ENCODE measurements at regions of chr19 and their contacts with region 1.

Region 1: DNA sequence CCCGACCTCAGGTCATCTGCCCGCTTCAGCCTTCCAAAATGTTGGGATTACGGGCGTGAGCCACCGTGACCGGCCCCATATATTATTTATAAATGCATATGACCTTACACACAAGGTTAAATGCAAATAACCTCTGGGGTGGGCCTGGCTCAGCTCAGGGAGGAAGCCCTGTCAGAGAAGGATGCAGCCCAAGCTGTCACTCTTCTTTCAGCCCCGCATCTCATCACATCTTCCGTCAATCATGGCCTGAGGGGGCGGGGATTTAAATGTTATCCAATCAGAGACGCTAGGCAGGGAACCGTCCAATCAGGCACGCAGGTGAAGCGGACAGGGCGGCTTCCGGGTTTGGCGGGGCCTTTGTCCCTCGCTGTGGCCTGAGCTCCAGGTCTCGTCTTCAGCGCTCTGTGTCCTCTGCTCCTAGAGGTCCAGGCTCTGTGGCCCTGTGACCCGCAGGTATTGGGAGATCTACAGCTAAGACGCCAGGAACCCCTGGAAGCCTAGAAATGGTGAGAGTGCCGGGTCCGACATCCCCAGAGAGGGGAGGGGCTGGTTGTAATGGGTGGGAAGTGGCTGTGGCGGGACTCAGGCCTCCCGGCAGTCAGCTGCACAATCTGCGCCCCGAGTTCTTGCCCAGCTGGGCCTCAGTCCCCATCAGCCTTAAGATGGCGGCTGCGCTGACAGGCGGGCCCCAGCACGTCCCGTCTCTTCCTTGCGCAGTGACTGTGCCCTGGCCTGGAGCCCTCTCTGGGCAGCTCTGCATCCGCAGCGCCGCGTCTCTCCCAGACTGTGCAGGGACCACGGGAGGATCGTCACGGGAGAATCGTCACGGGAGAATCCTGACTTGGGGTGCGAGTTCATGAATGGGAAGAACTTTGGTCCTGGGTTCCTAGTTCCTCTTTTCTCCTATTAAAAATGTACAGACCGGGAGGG is at the start of gene ZNF430:
- DNase-seq: peak; percentile 98
- H3K4me3 ChIP-seq: peak within 1 kb of the TSS; percentile 93
- H3K27ac ChIP-seq: peak within 1 kb of the TSS; percentile 84
- H3K4me1 ChIP-seq: peaks cover 8% of the 10 kb centered on the region
- H3K27me3 ChIP-seq: no peaks in the 10 kb centered on the region
- CTCF ChIP-seq: no peak
- total RNA-seq, gene ZNF430: 11.3 and 12.4 TPM in 2 replicates

Region 2: GRCh38 chr19:20999731-21000352 is 20.7 kb before region 1 on chr19:
- CTCF ChIA-PET with region 1: no interaction called
- POLR2A ChIA-PET with region 1: no interaction called
- intact Hi-C with region 1: no loop called
- DNase-seq: peak; percentile 79
- H3K4me3 ChIP-seq: peak overlapping the region; percentile 42
- H3K27ac ChIP-seq: no peak overlapping the region
- H3K4me1 ChIP-seq: no peaks in the 10 kb centered on the region
- H3K27me3 ChIP-seq: no peaks in the 10 kb centered on the region
- CTCF ChIP-seq: no peak

Region 3: DNA sequence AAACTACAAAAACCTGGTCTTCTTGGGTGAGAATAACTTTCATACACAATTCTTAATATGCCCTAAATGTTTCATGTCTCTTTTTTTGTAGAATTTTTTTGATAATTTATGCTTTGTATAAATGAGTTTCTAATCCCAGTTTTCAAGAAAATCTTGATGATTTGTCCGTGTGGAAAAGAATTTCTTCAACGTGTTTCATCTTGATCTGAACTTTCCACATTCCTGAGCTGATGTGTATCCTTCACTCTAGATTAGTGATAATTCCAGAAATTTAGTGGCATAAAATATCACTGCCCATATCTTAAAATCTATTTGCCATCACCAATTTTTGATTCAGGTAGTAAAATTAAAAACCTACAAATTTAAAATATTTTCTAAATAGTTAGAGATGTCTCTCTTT is 145.9 kb after region 1 on chr19:
- CTCF ChIA-PET with region 1: no interaction called
- POLR2A ChIA-PET with region 1: no interaction called
- intact Hi-C with region 1: loop called (anchors 10 kb)
- DNase-seq: no peak
- H3K4me3 ChIP-seq: no peak overlapping the region
- H3K27ac ChIP-seq: no peak overlapping the region
- H3K4me1 ChIP-seq: no peaks in the 10 kb centered on the region
- H3K27me3 ChIP-seq: no peaks in the 10 kb centered on the region
- CTCF ChIP-seq: no peak